Ascending aorta (tissue), 2 donors: ENCODE measurements at regions of chr15 and their contacts with region 1.

Region 1: GRCh38 chr15:78437762-78438302 is at the start of gene IREB2:
- DNase-seq: peak; percentile 97 to 99
- H3K4me3 ChIP-seq: peak within 1 kb of the TSS; percentile 67 to 96
- H3K27ac ChIP-seq: peak within 1 kb of the TSS; percentile 90 to 97
- H3K4me1 ChIP-seq: peaks cover 0 to 13% of the 10 kb centered on the region in 2 donors
- H3K27me3 ChIP-seq: no peaks in the 10 kb centered on the region
- CTCF ChIP-seq: no peak
- total RNA-seq, gene IREB2: 12.7 TPM

Region 2: GRCh38 chr15:77959432-77959879 is 478.4 kb before region 1 on chr15:
- intact Hi-C with region 1: loop called (anchors 10 kb)
- DNase-seq: peak; percentile 21 to 87
- H3K4me3 ChIP-seq: peak overlapping the region in 1 of 2 donors; percentile 41
- H3K27ac ChIP-seq: no peak overlapping the region
- H3K4me1 ChIP-seq: no peaks in the 10 kb centered on the region
- H3K27me3 ChIP-seq: no peaks in the 10 kb centered on the region
- CTCF ChIP-seq: peak; percentile 93 to 99 (median 94)

Region 3: GRCh38 chr15:78264304-78265136 is 173.3 kb before region 1 on chr15 and contains the start of gene DNAJA4:
- intact Hi-C with region 1: loop called (anchors 5 kb)
- DNase-seq: peak in 1 of 2 donors; percentile 78
- H3K4me3 ChIP-seq: peak within 1 kb of the TSS; percentile 61 to 92
- H3K27ac ChIP-seq: peak within 1 kb of the TSS; percentile 44 to 75
- H3K4me1 ChIP-seq: peaks cover 8 to 10% of the 10 kb centered on the region in 2 donors
- H3K27me3 ChIP-seq: no peaks in the 10 kb centered on the region
- CTCF ChIP-seq: peak in 1 of 3 experiments; percentile 28
- total RNA-seq, gene DNAJA4: 3.5 TPM

Region 4: GRCh38 chr15:78340231-78341056 is 97.4 kb before region 1 on chr15 and contains the start of gene CRABP1:
- intact Hi-C with region 1: no loop called
- DNase-seq: no peak
- H3K4me3 ChIP-seq: no peak within 1 kb of the TSS
- H3K27ac ChIP-seq: no peak within 1 kb of the TSS
- H3K4me1 ChIP-seq: no peaks in the 10 kb centered on the region
- H3K27me3 ChIP-seq: peaks cover 11% of the 10 kb centered on the region
- CTCF ChIP-seq: no peak
- total RNA-seq, gene CRABP1: not detected

Region 5: DNA sequence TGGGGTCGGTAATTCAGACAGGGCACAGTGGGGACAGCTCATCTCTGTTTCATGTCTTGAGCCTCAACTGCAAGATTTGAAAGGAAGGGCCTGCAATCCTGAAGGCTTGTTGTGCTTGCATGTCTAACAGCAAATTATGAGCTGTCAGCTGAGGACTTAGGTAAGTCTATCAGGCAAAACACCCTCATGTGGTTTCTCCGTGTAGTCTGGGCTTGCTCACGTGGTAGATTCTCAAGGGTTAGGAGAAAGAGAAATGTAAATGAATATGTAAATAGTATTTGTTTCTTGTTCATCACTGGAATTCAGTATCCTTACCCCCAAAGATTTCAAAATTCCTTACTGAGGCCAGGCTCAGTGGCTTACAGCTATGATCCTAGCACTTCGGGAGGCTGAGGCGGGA is 39.5 kb after region 1 on chr15:
- intact Hi-C with region 1: no loop called
- DNase-seq: no peak
- H3K4me3 ChIP-seq: no peak overlapping the region
- H3K27ac ChIP-seq: no peak overlapping the region
- H3K4me1 ChIP-seq: no peaks in the 10 kb centered on the region
- H3K27me3 ChIP-seq: no peaks in the 10 kb centered on the region
- CTCF ChIP-seq: no peak

Region 6: GRCh38 chr15:78506971-78507830 is 69.4 kb after region 1 on chr15 and contains the start of gene HYKK:
- intact Hi-C with region 1: loop called (anchors 2 kb)
- DNase-seq: peak; percentile 73 to 97
- H3K4me3 ChIP-seq: peak within 1 kb of the TSS; percentile 61 to 76
- H3K27ac ChIP-seq: peak within 1 kb of the TSS; percentile 44 to 59
- H3K4me1 ChIP-seq: peaks cover 0 to 4% of the 10 kb centered on the region in 2 donors
- H3K27me3 ChIP-seq: no peaks in the 10 kb centered on the region
- CTCF ChIP-seq: peak in 1 of 3 experiments; percentile 28
- total RNA-seq, gene HYKK: 9.0 TPM

Region 7: GRCh38 chr15:78750566-78750965 is 312.7 kb after region 1 on chr15:
- intact Hi-C with region 1: loop called (anchors 5 kb)
- DNase-seq: peak in 1 of 2 donors; percentile 61
- H3K4me3 ChIP-seq: peak overlapping the region; percentile 16 to 56
- H3K27ac ChIP-seq: peak overlapping the region; percentile 5 to 69
- H3K4me1 ChIP-seq: peaks cover 0 to 3% of the 10 kb centered on the region in 2 donors
- H3K27me3 ChIP-seq: no peaks in the 10 kb centered on the region
- CTCF ChIP-seq: no peak